A549 (cell line): ENCODE measurements at regions of chr19 and their contacts with region 1.

Region 1: GRCh38 chr19:1039646-1040475 is at the start of gene ABCA7:
- DNase-seq: peak; percentile 68 to 98
- ATAC-seq: peak; percentile 69 to 82
- H3K4me3 ChIP-seq: peak within 1 kb of the TSS; percentile 51
- H3K27ac ChIP-seq: peak within 1 kb of the TSS; percentile 62 to 86
- H3K4me1 ChIP-seq: peaks cover 19% of the 10 kb centered on the region
- CTCF ChIP-seq: no peak
- EP300 ChIP-seq: no peak
- POLR2A ChIP-seq: no peak; the same call in 1 of the 2 replicates
- RAD21 ChIP-seq: no peak
- polyA plus RNA-seq, gene ABCA7: 5.0 and 6.6 TPM in 2 replicates

Region 2: DNA sequence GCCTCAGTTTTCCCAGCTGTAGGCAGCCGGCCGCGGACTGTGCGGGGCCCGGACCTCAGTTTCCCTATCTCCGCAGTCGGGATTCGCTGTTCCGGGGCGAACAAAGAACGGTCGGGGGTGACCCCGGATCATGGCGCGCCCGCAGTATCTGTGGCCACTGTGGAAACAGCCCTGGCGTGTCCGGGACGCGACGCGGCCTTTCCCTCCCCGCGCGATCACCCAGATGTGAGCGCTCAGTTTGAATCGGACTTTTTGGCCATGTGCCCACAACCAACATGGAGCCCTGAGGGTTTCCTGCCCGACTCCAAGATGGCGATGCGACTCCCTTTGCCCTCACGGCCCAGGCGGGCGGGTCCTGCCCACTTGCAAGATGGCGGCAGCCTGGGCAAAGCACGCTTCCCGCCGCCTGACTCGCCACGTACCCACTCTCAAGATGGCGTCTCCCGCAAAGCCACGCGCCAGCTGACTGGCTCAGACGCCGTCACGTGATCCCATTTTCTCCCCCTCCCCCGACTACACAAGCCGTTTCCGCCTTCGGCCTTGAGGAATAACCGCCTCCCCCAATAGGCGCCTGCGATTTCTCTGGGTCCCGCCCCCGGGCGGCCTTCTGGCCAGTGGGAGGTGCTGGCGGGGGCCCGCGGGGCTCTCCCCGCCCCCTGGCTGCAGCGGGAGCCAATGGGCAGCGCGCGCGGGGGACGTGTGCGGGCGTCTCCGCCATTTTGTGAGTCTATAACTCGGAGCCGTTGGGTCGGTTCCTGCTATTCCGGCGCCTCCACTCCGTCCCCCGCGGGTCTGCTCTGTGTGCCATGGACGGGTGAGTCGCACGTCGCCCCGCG is 243.0 kb before region 1 on chr19 and contains the start of gene PTBP1:
- CTCF ChIA-PET with region 1: no interaction called
- POLR2A ChIA-PET with region 1: no interaction called
- DNase-seq: peak; percentile 86 to 100
- ATAC-seq: peak; percentile 79 to 85
- H3K4me3 ChIP-seq: peak within 1 kb of the TSS; percentile 100
- H3K27ac ChIP-seq: peak within 1 kb of the TSS; percentile 100
- H3K4me1 ChIP-seq: peaks cover 40% of the 10 kb centered on the region
- CTCF ChIP-seq: no peak
- EP300 ChIP-seq: no peak
- POLR2A ChIP-seq: peak; percentile 82
- RAD21 ChIP-seq: no peak
- polyA plus RNA-seq, gene PTBP1: 144 and 207 TPM in 2 replicates

Region 3: DNA sequence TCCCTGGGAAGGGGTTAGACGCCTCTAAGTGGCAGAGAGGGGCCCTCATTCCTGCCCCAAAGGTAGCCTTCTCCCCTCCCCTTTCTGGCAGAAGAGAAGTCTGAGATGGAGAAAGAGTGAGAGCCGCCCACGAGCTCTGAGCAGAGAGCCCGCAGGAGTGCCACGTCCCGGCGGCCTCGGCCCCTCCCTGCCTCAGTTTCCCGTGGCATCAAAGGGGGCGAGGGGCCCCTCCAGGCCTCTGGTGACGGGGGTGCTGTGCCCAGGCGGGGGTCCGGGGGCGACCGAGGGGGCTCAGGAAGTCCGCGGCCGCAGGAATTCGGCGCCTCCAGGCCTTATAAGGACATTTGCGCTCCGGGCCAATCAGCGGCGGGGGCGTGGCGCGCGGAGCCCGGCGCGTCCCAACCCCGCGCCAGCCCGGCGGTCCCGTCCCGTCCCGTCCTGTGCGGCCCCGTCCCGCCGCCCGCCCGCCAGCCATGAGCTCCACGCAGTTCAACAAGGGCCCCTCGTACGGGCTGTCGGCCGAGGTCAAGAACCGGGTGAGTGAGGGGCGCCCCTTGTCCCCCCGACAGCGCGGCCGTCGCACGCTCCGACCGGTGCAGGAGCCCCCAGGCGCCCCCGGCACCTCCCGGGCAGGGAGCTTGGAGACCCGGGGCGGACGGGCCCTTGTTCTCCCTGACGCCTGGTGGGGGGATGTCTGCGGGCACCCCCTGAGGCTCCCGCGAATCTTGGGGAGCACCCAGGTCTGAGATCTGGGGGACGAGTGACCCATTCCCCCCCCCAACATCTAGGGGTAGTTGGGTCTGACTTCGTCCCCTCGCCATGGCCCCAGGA is 13.5 kb before region 1 on chr19 and contains the start of gene CNN2:
- CTCF ChIA-PET with region 1: interaction called, 12 read pairs
- POLR2A ChIA-PET with region 1: interaction called, 7 read pairs
- DNase-seq: peak; percentile 67 to 69
- ATAC-seq: peak; percentile 81 to 89
- H3K4me3 ChIP-seq: peak within 1 kb of the TSS; percentile 87
- H3K27ac ChIP-seq: peak within 1 kb of the TSS; percentile 92 to 100
- H3K4me1 ChIP-seq: peaks cover 13% of the 10 kb centered on the region; the same call in 1 of the 3 replicates
- CTCF ChIP-seq: no peak
- EP300 ChIP-seq: no peak
- POLR2A ChIP-seq: peak; percentile 33
- RAD21 ChIP-seq: no peak
- polyA plus RNA-seq, gene CNN2: 31.7 and 32.2 TPM in 2 replicates